SK-N-SH (cell line): ENCODE measurements at regions of chr15 and their contacts with region 1.

Region 1: GRCh38 chr15:78709263-78709882 is 68.4 kb upstream of the CHRNB4 start:
- DNase-seq: peak; percentile 84
- H3K4me3 ChIP-seq: peak overlapping the region; percentile 30 to 52; a peak in 3 of 4 replicates
- H3K27ac ChIP-seq: peak overlapping the region in 1 of 2 experiments; percentile 98; a peak in 2 of 4 replicates
- H3K4me1 ChIP-seq: peaks cover 0 to 22% of the 10 kb centered on the region in 2 experiments; a peak in 2 of 4 replicates
- H3K27me3 ChIP-seq: peaks cover 10% of the 10 kb centered on the region; the same call in 1 of the 2 replicates
- CTCF ChIP-seq: peak; percentile 85
- EP300 ChIP-seq: no peak
- RAD21 ChIP-seq: peak; percentile 94

Region 2: GRCh38 chr15:78596514-78596913 is 112.9 kb before region 1 on chr15:
- CTCF ChIA-PET with region 1: interaction called, 13 read pairs
- POLR2A ChIA-PET with region 1: no interaction called
- DNase-seq: no peak
- H3K4me3 ChIP-seq: no peak overlapping the region
- H3K27ac ChIP-seq: no peak overlapping the region
- H3K4me1 ChIP-seq: peaks cover 0 to 6% of the 10 kb centered on the region in 2 experiments; a peak in 1 of 4 replicates
- H3K27me3 ChIP-seq: no peaks in the 10 kb centered on the region
- CTCF ChIP-seq: no peak
- EP300 ChIP-seq: no peak
- RAD21 ChIP-seq: no peak

Region 3: DNA sequence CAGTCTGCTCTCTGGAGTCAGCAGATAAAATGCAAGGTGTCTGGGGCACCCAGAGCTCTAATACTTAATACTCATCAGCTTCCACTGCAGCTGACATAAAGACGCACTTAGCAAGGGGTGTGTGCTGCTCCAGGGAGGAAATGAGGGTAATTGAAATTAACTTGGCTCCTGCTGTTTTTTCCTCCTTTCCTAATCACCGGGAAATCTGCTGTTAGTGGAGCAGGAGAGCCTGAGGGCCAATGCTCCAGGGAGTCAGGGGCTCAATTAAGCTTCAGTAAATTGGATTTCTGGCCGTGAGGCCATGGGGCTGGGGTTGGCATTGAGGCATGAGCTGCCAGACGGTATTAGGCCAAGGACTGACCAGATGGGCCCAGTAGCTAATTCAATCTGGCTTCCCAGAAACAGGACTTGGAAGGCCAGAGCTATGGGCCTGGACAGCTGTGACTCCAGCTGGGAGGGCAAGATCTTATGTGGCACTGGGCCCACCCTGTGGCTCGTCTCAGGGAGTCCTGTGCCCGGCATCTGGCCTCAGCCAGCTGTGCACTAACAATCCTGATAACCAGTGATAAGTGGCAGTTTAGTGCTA is 37.7 kb before region 1 on chr15:
- CTCF ChIA-PET with region 1: interaction called, 26 read pairs
- POLR2A ChIA-PET with region 1: interaction called, 22 read pairs
- DNase-seq: peak; percentile 88
- H3K4me3 ChIP-seq: no peak overlapping the region
- H3K27ac ChIP-seq: peak overlapping the region in 1 of 2 experiments; percentile 99; a peak in 2 of 4 replicates
- H3K4me1 ChIP-seq: peaks cover 0 to 65% of the 10 kb centered on the region in 2 experiments; a peak in 2 of 4 replicates
- H3K27me3 ChIP-seq: no peaks in the 10 kb centered on the region
- CTCF ChIP-seq: no peak
- EP300 ChIP-seq: peak; percentile 54 to 100; a peak in 3 of 4 replicates
- RAD21 ChIP-seq: peak; percentile 35

Region 4: GRCh38 chr15:78685159-78685921 is 24.0 kb before region 1 on chr15:
- CTCF ChIA-PET with region 1: interaction called, 44 read pairs
- POLR2A ChIA-PET with region 1: interaction called, 6 read pairs
- DNase-seq: peak; percentile 32
- H3K4me3 ChIP-seq: no peak overlapping the region
- H3K27ac ChIP-seq: peak overlapping the region in 1 of 2 experiments; percentile 93; a peak in 2 of 4 replicates
- H3K4me1 ChIP-seq: peaks cover 0 to 53% of the 10 kb centered on the region in 2 experiments; a peak in 2 of 4 replicates
- H3K27me3 ChIP-seq: peaks cover 6% of the 10 kb centered on the region; the same call in 1 of the 2 replicates
- CTCF ChIP-seq: no peak
- EP300 ChIP-seq: peak in 1 of 2 experiments; percentile 65; a peak in 1 of 4 replicates
- RAD21 ChIP-seq: no peak

Region 5: DNA sequence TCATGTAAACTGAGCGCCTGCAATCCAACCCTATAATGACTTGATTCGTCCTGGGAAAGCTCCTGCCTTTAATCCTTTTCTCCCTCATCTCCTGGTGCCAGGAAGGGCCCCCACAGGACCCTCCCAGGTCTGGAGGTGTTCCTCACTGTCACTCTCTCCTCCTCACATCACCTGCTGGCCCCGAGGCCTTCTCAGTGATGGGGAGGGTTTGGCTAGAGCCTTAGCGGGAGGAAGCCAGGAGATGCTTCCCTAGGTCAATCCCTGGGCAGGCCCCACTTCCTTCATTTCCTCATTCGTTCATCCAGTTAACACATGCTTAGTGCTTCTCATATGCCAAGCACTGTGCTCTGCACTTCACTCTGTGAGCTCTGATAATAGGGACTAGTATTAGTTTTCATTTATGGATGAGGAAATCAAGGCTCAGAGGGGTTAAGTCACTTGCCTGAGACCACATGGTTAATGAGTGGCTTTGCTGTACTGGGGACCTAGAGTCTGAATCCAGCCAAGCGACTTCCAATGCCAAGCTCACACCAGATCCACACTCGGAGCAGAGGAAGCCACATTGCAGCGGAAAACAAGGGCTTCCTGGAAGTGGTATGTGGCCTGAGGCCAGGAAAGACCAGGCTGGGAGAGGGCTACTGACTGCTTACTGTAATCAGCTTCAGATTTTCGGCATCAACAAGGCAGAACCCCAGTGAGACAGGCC is 18.1 kb before region 1 on chr15:
- CTCF ChIA-PET with region 1: interaction called, 44 read pairs
- POLR2A ChIA-PET with region 1: interaction called, 3 read pairs
- DNase-seq: no peak
- H3K4me3 ChIP-seq: no peak overlapping the region
- H3K27ac ChIP-seq: peak overlapping the region in 1 of 2 experiments; percentile 76; a peak in 2 of 4 replicates
- H3K4me1 ChIP-seq: peaks cover 0 to 34% of the 10 kb centered on the region in 2 experiments; a peak in 1 of 4 replicates
- H3K27me3 ChIP-seq: peaks cover 6% of the 10 kb centered on the region; the same call in 1 of the 2 replicates
- CTCF ChIP-seq: no peak
- EP300 ChIP-seq: no peak
- RAD21 ChIP-seq: no peak

Region 6: GRCh38 chr15:78727600-78727999 is 18.2 kb after region 1 on chr15:
- CTCF ChIA-PET with region 1: interaction called, 11 read pairs
- POLR2A ChIA-PET with region 1: no interaction called
- DNase-seq: no peak
- H3K4me3 ChIP-seq: no peak overlapping the region
- H3K27ac ChIP-seq: no peak overlapping the region
- H3K4me1 ChIP-seq: no peaks in the 10 kb centered on the region
- H3K27me3 ChIP-seq: no peaks in the 10 kb centered on the region
- CTCF ChIP-seq: no peak
- EP300 ChIP-seq: no peak
- RAD21 ChIP-seq: no peak

Region 7: DNA sequence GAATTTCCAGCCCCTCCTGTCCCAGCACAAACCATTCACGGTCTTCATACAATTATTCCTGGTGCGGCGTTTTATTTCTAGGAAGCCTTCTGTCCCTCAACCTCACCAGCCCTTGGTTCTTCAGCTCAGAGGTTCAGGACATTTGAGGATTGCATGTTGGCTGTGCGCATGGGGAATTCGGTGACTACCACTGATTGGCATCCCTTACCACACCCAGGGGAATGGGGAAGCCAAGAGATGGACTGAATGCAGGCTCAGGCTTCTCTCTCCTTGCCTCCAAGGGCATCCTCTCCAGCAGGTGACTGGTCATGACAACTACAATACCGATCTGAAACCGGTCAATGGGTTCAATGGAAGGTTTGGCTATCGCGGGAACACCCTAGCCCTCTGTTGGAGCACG is 1033.7 kb after region 1 on chr15:
- CTCF ChIA-PET with region 1: no interaction called
- POLR2A ChIA-PET with region 1: no interaction called
- DNase-seq: no peak
- H3K4me3 ChIP-seq: no peak overlapping the region
- H3K27ac ChIP-seq: no peak overlapping the region
- H3K4me1 ChIP-seq: peaks cover 0 to 12% of the 10 kb centered on the region in 2 experiments; a peak in 2 of 4 replicates
- H3K27me3 ChIP-seq: no peaks in the 10 kb centered on the region
- CTCF ChIP-seq: no peak
- EP300 ChIP-seq: no peak
- RAD21 ChIP-seq: no peak